ENCODE measurements at regions of chr11 and their contacts with region 1.

Region 1: GRCh38 chr11:124673333-124674167 is at the starts of genes SIAE and SPA17:
- DNase-seq: peak; percentile 94 to 97 (median 96)
- ATAC-seq: peak; percentile 99 to 100 (median 99)
- H3K4me3 ChIP-seq: peak within 1 kb of the TSS; percentile 64 to 85 (median 76)
- H3K27ac ChIP-seq: peak within 1 kb of the TSS; percentile 60 to 93 (median 88)
- H3K4me1 ChIP-seq: peaks cover 0 to 45% (median 26%) of the 10 kb centered on the region in 12 donors
- H3K27me3 ChIP-seq: no peaks in the 10 kb centered on the region
- CTCF ChIP-seq: no peak
- POLR2A ChIP-seq: peak in 1 of 2 donors; percentile 78
- total RNA-seq, gene SIAE: 36.7 to 87.8 (median 60.1) TPM
- total RNA-seq, gene SPA17: 1.3 to 4.4 (median 2.8) TPM

Region 2: GRCh38 chr11:124732230-124732629 is 58.7 kb after region 1 on chr11:
- intact Hi-C with region 1: loop called in 1 of 10 experiments (anchors 5 kb)
- DNase-seq: peak in 2 of 5 donors; percentile 49 to 50
- ATAC-seq: peak in 2 of 4 donors; percentile 55 to 57
- H3K4me3 ChIP-seq: no peak overlapping the region
- H3K27ac ChIP-seq: peak overlapping the region in 1 of 12 donors; percentile 53
- H3K4me1 ChIP-seq: peaks cover 0 to 33% (median 0%) of the 10 kb centered on the region in 12 donors
- H3K27me3 ChIP-seq: no peaks in the 10 kb centered on the region
- CTCF ChIP-seq: no peak
- POLR2A ChIP-seq: no peak

Region 3: GRCh38 chr11:124758317-124759203 is 85.0 kb after region 1 on chr11:
- intact Hi-C with region 1: loop called in 8 of 10 experiments (anchors 1 to 5 kb)
- DNase-seq: peak; percentile 73 to 90 (median 78)
- ATAC-seq: peak; percentile 38 to 57 (median 54)
- H3K4me3 ChIP-seq: peak overlapping the region; percentile 25 to 95 (median 76)
- H3K27ac ChIP-seq: peak overlapping the region; percentile 69 to 99 (median 94)
- H3K4me1 ChIP-seq: peaks cover 0 to 83% (median 58%) of the 10 kb centered on the region in 12 donors
- H3K27me3 ChIP-seq: peaks cover 0 to 64% (median 36%) of the 10 kb centered on the region in 9 donors
- CTCF ChIP-seq: peak; percentile 50 to 77 (median 71)
- POLR2A ChIP-seq: no peak

Region 4: GRCh38 chr11:124779568-124779967 is 106.0 kb after region 1 on chr11:
- intact Hi-C with region 1: no loop called
- DNase-seq: no peak
- ATAC-seq: no peak
- H3K4me3 ChIP-seq: no peak overlapping the region
- H3K27ac ChIP-seq: no peak overlapping the region
- H3K4me1 ChIP-seq: peaks cover 0 to 4% (median 0%) of the 10 kb centered on the region in 12 donors
- H3K27me3 ChIP-seq: no peaks in the 10 kb centered on the region
- CTCF ChIP-seq: no peak
- POLR2A ChIP-seq: no peak

Region 5: DNA sequence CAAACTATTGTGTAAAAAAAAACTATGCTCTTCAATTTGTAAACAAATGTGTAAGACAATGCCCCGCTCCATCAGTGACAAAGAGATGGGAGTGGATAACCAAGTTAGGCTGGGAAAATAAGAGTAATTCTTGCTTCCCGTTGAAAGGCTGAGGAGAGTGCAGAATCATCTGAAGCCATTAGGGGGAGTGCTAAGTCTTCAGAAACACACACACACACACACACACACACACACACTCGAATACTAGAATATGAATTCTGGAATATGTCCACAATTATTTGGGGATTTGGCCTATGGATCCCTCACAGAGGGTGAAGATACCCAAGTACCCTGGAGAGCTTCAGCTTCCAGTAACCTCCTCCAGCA is 163.9 kb after region 1 on chr11:
- intact Hi-C with region 1: loop called (anchors 1 to 5 kb)
- DNase-seq: peak in 1 of 5 donors; percentile 26
- ATAC-seq: peak in 3 of 4 donors; percentile 53 to 71 (median 69)
- H3K4me3 ChIP-seq: no peak overlapping the region
- H3K27ac ChIP-seq: no peak overlapping the region
- H3K4me1 ChIP-seq: peaks cover 6 to 20% (median 15%) of the 10 kb centered on the region in 12 donors
- H3K27me3 ChIP-seq: peaks cover 23 to 70% (median 45%) of the 10 kb centered on the region in 9 donors
- CTCF ChIP-seq: peak in 1 of 12 donors; percentile 20
- POLR2A ChIP-seq: no peak